Esophagus muscularis mucosa (tissue), 4 donors: ENCODE measurements at regions of chr6 and their contacts with region 1.

Region 1: GRCh38 chr6:153511896-153512496 is 380.9 kb upstream of the RGS17 start:
- DNase-seq: no peak
- H3K4me3 ChIP-seq: no peak overlapping the region
- H3K27ac ChIP-seq: no peak overlapping the region
- H3K4me1 ChIP-seq: no peaks in the 10 kb centered on the region
- H3K27me3 ChIP-seq: no peaks in the 10 kb centered on the region
- CTCF ChIP-seq: peak; percentile 20 to 63 (median 40)
- EP300 ChIP-seq: no peak
- POLR2A ChIP-seq: no peak

Region 2: DNA sequence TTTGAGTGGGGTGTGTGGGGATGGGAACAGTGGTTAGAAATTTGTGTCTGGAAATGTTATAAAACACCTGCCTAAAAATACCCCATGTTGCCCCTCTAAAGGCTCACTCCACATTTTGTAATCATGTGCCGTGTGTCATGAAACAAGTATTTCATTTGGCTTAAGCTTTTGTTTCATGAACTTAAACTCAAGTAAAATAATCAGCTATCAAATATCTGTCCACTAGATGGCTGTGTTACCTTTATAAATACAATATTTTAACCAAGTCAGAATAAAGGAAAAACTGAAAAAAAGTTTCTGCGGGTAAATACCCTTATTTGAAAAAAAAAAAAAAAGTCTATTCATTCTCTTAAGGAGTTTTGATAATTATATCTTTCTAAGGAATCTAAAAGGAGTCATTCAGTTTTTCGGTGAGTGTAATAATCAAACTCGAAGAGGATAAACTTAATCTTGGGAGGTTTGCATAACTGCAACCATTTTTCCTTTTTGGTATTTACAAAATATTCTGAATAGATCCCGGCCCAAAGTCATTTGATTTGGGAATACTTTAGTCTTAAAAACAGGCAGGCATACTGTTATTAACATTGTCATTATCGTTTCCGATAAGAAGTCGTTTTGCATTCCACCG is 479.6 kb before region 1 on chr6:
- intact Hi-C with region 1: loop called (anchors 10 kb)
- DNase-seq: no peak
- H3K4me3 ChIP-seq: no peak overlapping the region
- H3K27ac ChIP-seq: no peak overlapping the region
- H3K4me1 ChIP-seq: no peaks in the 10 kb centered on the region
- H3K27me3 ChIP-seq: no peaks in the 10 kb centered on the region
- CTCF ChIP-seq: peak; percentile 14 to 44 (median 38)
- EP300 ChIP-seq: no peak
- POLR2A ChIP-seq: no peak

Region 3: GRCh38 chr6:153767127-153767526 is 255.1 kb after region 1 on chr6:
- intact Hi-C with region 1: no loop called
- DNase-seq: no peak
- H3K4me3 ChIP-seq: no peak overlapping the region
- H3K27ac ChIP-seq: no peak overlapping the region
- H3K4me1 ChIP-seq: no peaks in the 10 kb centered on the region
- H3K27me3 ChIP-seq: no peaks in the 10 kb centered on the region
- CTCF ChIP-seq: no peak
- EP300 ChIP-seq: no peak
- POLR2A ChIP-seq: no peak